GM12878 (cell line): ENCODE measurements at regions of chr5 and their contacts with region 1.

Region 1: DNA sequence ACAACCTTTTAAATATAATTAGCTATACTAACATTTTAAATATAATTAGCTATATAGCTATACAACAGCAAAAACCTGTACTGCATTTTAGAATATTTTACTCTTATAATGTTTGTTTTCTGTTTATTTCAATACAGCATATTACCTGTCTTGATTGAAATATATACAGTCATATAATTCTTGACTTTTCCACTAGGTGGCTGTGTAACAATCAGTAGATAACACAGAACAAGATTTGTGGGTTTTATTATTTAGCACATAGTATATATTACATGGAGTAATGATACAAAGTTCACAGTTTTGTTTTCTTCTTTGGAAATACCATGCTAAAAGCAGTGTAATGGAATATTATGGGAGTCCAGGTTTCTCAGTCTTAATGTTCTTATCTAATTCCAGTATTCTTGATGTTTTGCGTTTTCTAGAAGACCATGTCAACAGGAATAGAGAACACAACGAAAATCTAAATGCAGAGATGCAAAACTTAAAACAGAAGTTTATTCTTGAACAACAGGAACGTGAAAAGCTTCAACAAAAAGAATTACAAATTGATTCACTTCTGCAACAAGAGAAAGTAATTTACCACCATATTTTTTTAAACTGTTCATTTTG is 13.3 kb downstream of the HMMR start:
- DNase-seq: no peak
- ATAC-seq: peak; percentile 88
- H3K4me3 ChIP-seq: no peak overlapping the region
- H3K27ac ChIP-seq: no peak overlapping the region
- H3K4me1 ChIP-seq: no peaks in the 10 kb centered on the region
- H3K27me3 ChIP-seq: no peaks in the 10 kb centered on the region
- CTCF ChIP-seq: peak in 2 of 3 experiments; percentile 22 to 38; a peak in 3 of 6 replicates
- EP300 ChIP-seq: no peak
- POLR2A ChIP-seq: no peak
- RAD21 ChIP-seq: peak; percentile 27; the same call in 1 of the 2 replicates

Region 2: GRCh38 chr5:163489055-163489744 is 15.5 kb after region 1 on chr5:
- CTCF ChIA-PET with region 1: interaction called, 12 read pairs
- POLR2A ChIA-PET with region 1: interaction called, 3 read pairs
- RAD21 ChIA-PET with region 1: no interaction called
- SMC1A ChIA-PET with region 1: interaction called, 8 read pairs
- in situ Hi-C with region 1: no loop called
- intact Hi-C with region 1: no loop called
- DNase-seq: no peak
- ATAC-seq: peak; percentile 41; the same call in 2 of the 3 replicates
- H3K4me3 ChIP-seq: no peak overlapping the region
- H3K27ac ChIP-seq: no peak overlapping the region
- H3K4me1 ChIP-seq: no peaks in the 10 kb centered on the region
- H3K27me3 ChIP-seq: no peaks in the 10 kb centered on the region
- CTCF ChIP-seq: peak; percentile 7 to 21 (median 15); a peak in 2 of 6 replicates
- EP300 ChIP-seq: no peak
- POLR2A ChIP-seq: no peak
- RAD21 ChIP-seq: no peak

Region 3: GRCh38 chr5:163496286-163496685 is 22.5 kb after region 1 on chr5:
- CTCF ChIA-PET with region 1: interaction called, 12 read pairs
- POLR2A ChIA-PET with region 1: interaction called, 6 read pairs
- RAD21 ChIA-PET with region 1: interaction called, 3 read pairs
- SMC1A ChIA-PET with region 1: interaction called, 4 read pairs
- in situ Hi-C with region 1: no loop called
- intact Hi-C with region 1: no loop called
- DNase-seq: no peak
- ATAC-seq: no peak
- H3K4me3 ChIP-seq: no peak overlapping the region
- H3K27ac ChIP-seq: no peak overlapping the region
- H3K4me1 ChIP-seq: no peaks in the 10 kb centered on the region
- H3K27me3 ChIP-seq: no peaks in the 10 kb centered on the region
- CTCF ChIP-seq: no peak
- EP300 ChIP-seq: no peak
- POLR2A ChIP-seq: no peak
- RAD21 ChIP-seq: no peak

Region 4: DNA sequence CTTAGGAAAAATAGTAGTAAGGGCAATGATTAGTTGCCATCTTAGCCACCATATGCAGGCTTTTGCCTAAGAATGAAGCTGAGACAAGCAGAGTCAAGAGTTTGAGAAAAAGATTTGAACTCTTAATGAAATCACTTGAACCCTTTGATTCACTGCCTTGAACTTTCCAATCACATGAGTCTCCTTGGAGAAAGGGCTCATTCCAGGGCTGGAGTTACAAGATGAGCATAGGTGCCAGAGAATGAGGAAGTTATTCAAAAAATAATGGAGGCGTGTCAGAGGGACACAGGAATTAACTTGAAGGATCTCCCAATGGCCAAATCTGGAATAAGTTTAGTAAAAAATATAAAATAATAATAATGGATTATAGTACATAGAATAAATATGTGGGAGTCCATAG is 67.0 kb after region 1 on chr5:
- CTCF ChIA-PET with region 1: no interaction called
- POLR2A ChIA-PET with region 1: no interaction called
- RAD21 ChIA-PET with region 1: no interaction called
- SMC1A ChIA-PET with region 1: no interaction called
- in situ Hi-C with region 1: no loop called
- intact Hi-C with region 1: no loop called
- DNase-seq: no peak
- ATAC-seq: no peak
- H3K4me3 ChIP-seq: no peak overlapping the region
- H3K27ac ChIP-seq: no peak overlapping the region
- H3K4me1 ChIP-seq: no peaks in the 10 kb centered on the region
- H3K27me3 ChIP-seq: 0 out of 4 replicates have a peak, but pooled peaks cover 0 to 3% of the 10 kb centered on the region in 2 experiments
- CTCF ChIP-seq: no peak
- EP300 ChIP-seq: no peak
- POLR2A ChIP-seq: no peak
- RAD21 ChIP-seq: no peak

Region 5: GRCh38 chr5:163706053-163706771 is 232.5 kb after region 1 on chr5:
- CTCF ChIA-PET with region 1: no interaction called
- POLR2A ChIA-PET with region 1: no interaction called
- RAD21 ChIA-PET with region 1: no interaction called
- SMC1A ChIA-PET with region 1: no interaction called
- in situ Hi-C with region 1: no loop called
- intact Hi-C with region 1: no loop called
- DNase-seq: no peak
- ATAC-seq: no peak
- H3K4me3 ChIP-seq: no peak overlapping the region
- H3K27ac ChIP-seq: no peak overlapping the region
- H3K4me1 ChIP-seq: no peaks in the 10 kb centered on the region
- H3K27me3 ChIP-seq: no peaks in the 10 kb centered on the region; a peak in 1 of 4 replicates
- CTCF ChIP-seq: no peak
- EP300 ChIP-seq: no peak
- POLR2A ChIP-seq: no peak
- RAD21 ChIP-seq: no peak